Activated naive CD4-positive, alpha-beta T cell treated with anti-CD3 and anti-CD28 coated beads for 36 hours (primary cell): ENCODE measurements at regions of chr18 and their contacts with region 1.

Region 1: DNA sequence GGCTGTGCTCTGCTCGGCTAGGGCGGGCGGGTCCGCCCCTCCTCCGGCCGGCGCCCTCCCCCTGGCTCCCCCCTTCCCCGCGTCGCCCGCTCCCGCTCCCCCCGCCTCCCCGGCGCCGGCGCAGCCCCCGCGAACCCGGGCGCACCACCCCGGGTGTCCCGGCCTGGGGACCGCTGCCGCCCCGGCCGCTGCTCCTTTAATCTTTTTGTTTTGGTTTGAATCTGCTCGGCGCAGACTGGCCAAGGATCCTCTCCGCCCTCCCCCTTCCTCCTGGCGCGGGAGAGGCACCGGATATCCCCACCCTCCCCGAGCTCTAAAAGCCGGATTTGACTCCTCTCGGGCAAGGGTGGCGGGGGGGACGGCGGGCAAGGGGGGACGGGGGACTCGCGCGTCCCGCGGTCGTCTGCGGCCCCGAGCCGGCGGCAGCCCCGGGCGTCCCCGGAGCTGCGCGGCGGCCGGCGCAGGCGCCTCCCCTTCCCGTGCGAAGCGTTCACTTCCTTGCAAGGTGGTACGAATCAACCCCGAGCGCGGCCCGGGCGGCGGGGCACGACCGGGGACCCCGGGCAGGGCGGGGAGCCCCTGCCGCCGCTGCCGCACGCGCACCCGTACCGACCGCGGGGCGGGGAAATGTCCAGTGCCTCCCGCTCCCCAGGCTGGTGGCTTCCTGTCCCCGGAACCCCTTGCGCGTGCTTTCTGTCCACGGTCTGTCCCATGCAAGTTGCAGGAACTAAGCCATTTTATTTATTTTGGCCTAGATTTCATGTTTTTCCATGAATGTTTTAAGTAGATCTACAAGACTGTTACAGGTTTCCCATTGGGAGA is at the start of gene PTGR3:
- DNase-seq: peak; percentile 92
- H3K4me3 Mint-ChIP-seq: peak within 1 kb of the TSS; percentile 97
- H3K27ac Mint-ChIP-seq: peak within 1 kb of the TSS; percentile 98
- H3K4me1 Mint-ChIP-seq: peaks cover 51% of the 10 kb centered on the region
- H3K27me3 Mint-ChIP-seq: peaks cover 12% of the 10 kb centered on the region
- total RNA-seq, gene PTGR3: 28.4 to 33.0 TPM

Region 2: GRCh38 chr18:74139888-74140287 is 1069.5 kb before region 1 on chr18:
- CTCF ChIA-PET with region 1: no interaction called
- intact Hi-C with region 1: loop called (anchors 2 kb)
- DNase-seq: peak; percentile 73
- H3K4me3 Mint-ChIP-seq: peak overlapping the region; percentile 27
- H3K27ac Mint-ChIP-seq: peak overlapping the region; percentile 88
- H3K4me1 Mint-ChIP-seq: peaks cover 42% of the 10 kb centered on the region
- H3K27me3 Mint-ChIP-seq: peaks cover 2% of the 10 kb centered on the region

Region 3: DNA sequence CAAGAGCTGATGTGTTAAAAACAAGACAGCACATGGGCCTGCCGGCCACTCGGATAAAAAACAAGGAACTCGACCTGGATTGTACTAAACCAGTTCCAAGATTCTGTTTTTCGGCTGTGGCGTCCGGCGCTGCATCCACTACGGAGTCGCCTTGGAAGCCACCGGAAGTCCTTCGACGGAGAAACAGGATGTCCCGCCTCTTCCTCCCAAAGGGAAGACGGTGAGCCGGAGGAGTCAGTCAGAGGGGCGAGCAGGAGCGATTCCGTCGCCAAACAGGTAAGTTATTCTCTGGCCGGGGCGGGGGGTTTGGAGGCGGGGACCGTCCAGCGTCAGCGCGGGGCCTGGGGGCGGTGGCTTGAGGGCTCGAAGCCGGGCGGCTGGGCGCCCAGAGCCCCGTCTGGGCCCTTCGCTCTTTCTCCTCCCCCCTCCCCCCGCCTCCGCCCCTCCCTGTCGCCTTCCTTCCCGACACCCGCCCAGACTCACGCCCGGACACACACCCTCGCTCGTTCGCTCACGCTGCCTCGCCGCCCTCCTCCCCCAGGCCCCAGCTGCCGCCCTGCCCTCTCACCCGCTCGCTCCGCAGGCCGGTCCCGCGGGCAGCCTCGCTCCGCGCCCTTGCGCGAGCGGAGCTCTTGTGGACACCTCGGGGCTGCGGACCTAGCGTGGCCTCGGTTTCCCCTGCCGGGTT is 611.5 kb before region 1 on chr18 and contains the start of gene ZNF407:
- CTCF ChIA-PET with region 1: no interaction called
- intact Hi-C with region 1: loop called (anchors 1 kb)
- DNase-seq: peak; percentile 91
- H3K4me3 Mint-ChIP-seq: peak within 1 kb of the TSS; percentile 86
- H3K27ac Mint-ChIP-seq: peak within 1 kb of the TSS; percentile 98
- H3K4me1 Mint-ChIP-seq: peaks cover 38% of the 10 kb centered on the region
- H3K27me3 Mint-ChIP-seq: no peaks in the 10 kb centered on the region
- total RNA-seq, gene ZNF407: 9.8 to 9.9 TPM

Region 4: GRCh38 chr18:75070625-75071483 is 138.5 kb before region 1 on chr18:
- CTCF ChIA-PET with region 1: no interaction called
- intact Hi-C with region 1: loop called (anchors 1 kb)
- DNase-seq: peak; percentile 88
- H3K4me3 Mint-ChIP-seq: peak overlapping the region; percentile 73
- H3K27ac Mint-ChIP-seq: peak overlapping the region; percentile 95
- H3K4me1 Mint-ChIP-seq: peaks cover 31% of the 10 kb centered on the region
- H3K27me3 Mint-ChIP-seq: no peaks in the 10 kb centered on the region

Region 5: GRCh38 chr18:75408554-75409506 is 199.5 kb after region 1 on chr18:
- CTCF ChIA-PET with region 1: interaction called, 3 read pairs
- intact Hi-C with region 1: loop called (anchors 2 kb)
- DNase-seq: peak; percentile 60
- H3K4me3 Mint-ChIP-seq: no peak overlapping the region
- H3K27ac Mint-ChIP-seq: no peak overlapping the region
- H3K4me1 Mint-ChIP-seq: peaks cover 22% of the 10 kb centered on the region
- H3K27me3 Mint-ChIP-seq: peaks cover 2% of the 10 kb centered on the region

Region 6: GRCh38 chr18:77101410-77102258 is 1892.3 kb after region 1 on chr18:
- CTCF ChIA-PET with region 1: no interaction called
- intact Hi-C with region 1: loop called (anchors 10 kb)
- DNase-seq: peak; percentile 82
- H3K4me3 Mint-ChIP-seq: peak overlapping the region; percentile 50
- H3K27ac Mint-ChIP-seq: peak overlapping the region; percentile 98
- H3K4me1 Mint-ChIP-seq: peaks cover 92% of the 10 kb centered on the region
- H3K27me3 Mint-ChIP-seq: no peaks in the 10 kb centered on the region